ENCODE measurements at regions of chr7 and their contacts with region 1.

Region 1: GRCh38 chr7:35185907-35186731 is 67.8 kb downstream of the TBX20 start:
- DNase-seq: peak; percentile 43 to 72
- ATAC-seq: peak; percentile 80 to 97 (median 89)
- H3K4me3 ChIP-seq: peak overlapping the region; percentile 38 to 61 (median 52)
- H3K27ac ChIP-seq: peak overlapping the region; percentile 43 to 90 (median 84)
- H3K4me1 ChIP-seq: peaks cover 0 to 16% (median 0%) of the 10 kb centered on the region in 9 donors
- H3K27me3 ChIP-seq: peaks cover 0 to 25% (median 10%) of the 10 kb centered on the region in 7 donors
- CTCF ChIP-seq: peak in 2 of 9 donors; percentile 25 to 48

Region 2: GRCh38 chr7:35519971-35520809 is 334.1 kb after region 1 on chr7:
- intact Hi-C with region 1: loop called in 4 of 10 experiments (anchors 5 to 10 kb)
- DNase-seq: peak; percentile 71 to 86
- ATAC-seq: peak; percentile 80 to 91 (median 86)
- H3K4me3 ChIP-seq: no peak overlapping the region
- H3K27ac ChIP-seq: peak overlapping the region in 3 of 10 donors; percentile 40 to 41 (median 40)
- H3K4me1 ChIP-seq: peaks cover 0 to 24% (median 20%) of the 10 kb centered on the region in 9 donors
- H3K27me3 ChIP-seq: peaks cover 0 to 8% (median 0%) of the 10 kb centered on the region in 7 donors
- CTCF ChIP-seq: peak; percentile 69 to 92 (median 88)

Region 3: DNA sequence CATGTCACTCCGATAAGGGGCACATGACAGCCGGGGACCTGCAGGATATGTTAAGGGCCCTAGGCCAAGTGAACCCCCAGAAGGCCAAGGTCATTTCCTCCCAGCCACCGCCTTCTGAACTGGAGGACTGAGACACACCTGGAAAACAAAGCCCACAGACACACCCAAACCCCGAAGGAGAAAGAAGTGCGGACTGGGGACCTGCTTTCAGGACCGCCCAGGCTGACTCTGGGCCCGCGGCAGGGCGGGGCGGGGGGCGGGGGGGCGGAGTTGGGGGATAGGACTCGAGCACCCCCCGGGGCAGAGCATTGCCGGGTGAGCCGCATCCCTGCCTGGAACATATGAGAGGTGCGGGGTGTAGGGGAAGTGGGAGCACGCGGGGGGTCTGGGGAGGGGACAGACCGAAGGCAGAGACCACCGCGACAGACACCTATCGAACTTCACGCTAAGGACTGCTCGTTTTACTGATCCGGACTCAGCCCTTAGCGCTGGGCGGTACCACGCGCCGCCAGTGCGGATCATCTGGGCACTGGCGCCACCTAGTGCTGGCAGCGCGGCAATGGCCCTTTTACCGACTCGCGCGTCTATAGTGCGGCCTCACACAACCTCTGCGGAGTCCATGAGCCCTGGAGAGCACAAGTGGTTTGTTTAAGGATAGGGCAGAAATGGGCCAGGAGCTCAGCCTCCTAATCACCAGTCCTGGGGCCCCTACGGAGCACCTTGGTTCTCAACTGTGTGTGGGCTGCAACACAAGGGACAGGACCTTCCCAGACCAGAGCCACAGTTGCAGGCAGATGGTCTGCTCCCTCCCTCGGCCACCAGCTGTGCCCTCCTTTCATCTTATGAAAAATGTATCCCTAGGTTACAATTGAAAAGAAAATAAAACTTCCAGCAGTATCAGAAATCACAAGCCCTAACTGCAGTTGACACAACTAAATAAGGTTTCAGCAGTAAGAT is 351.2 kb after region 1 on chr7:
- intact Hi-C with region 1: loop called in 3 of 10 experiments (anchors 10 kb)
- DNase-seq: peak; percentile 75 to 84
- ATAC-seq: peak; percentile 96 to 98 (median 97)
- H3K4me3 ChIP-seq: peak overlapping the region in 9 of 10 donors; percentile 33 to 55 (median 51)
- H3K27ac ChIP-seq: no peak overlapping the region
- H3K4me1 ChIP-seq: peaks cover 0 to 12% (median 7%) of the 10 kb centered on the region in 9 donors
- H3K27me3 ChIP-seq: peaks cover 0 to 8% (median 4%) of the 10 kb centered on the region in 7 donors
- CTCF ChIP-seq: peak; percentile 81 to 97 (median 94)

Measured in heart right ventricle (tissue), 16 donors.